ENCODE measurements at regions of chr15 and their contacts with region 1.

Region 1: GRCh38 chr15:99733268-99734039 is at the start of gene LYSMD4:
- DNase-seq: peak; percentile 100
- ATAC-seq: peak; percentile 99
- H3K4me3 Mint-ChIP-seq: peak within 1 kb of the TSS; percentile 71
- H3K27ac Mint-ChIP-seq: peak within 1 kb of the TSS; percentile 91
- H3K4me1 Mint-ChIP-seq: peaks cover 23% of the 10 kb centered on the region
- H3K27me3 Mint-ChIP-seq: no peaks in the 10 kb centered on the region
- total RNA-seq, gene LYSMD4: 4.7 to 5.3 TPM

Region 2: GRCh38 chr15:99250494-99251435 is 482.7 kb before region 1 on chr15:
- CTCF ChIA-PET with region 1: no interaction called
- POLR2A ChIA-PET with region 1: interaction called, 3 read pairs
- intact Hi-C with region 1: loop called (anchors 1 kb)
- DNase-seq: peak; percentile 98
- ATAC-seq: peak; percentile 99
- H3K4me3 Mint-ChIP-seq: no peak overlapping the region
- H3K27ac Mint-ChIP-seq: peak overlapping the region; percentile 95
- H3K4me1 Mint-ChIP-seq: peaks cover 22% of the 10 kb centered on the region
- H3K27me3 Mint-ChIP-seq: no peaks in the 10 kb centered on the region

Measured in activated CD4-positive, alpha-beta T cell treated with anti-CD3 and anti-CD28 coated beads for 36 hours (primary cell).